ENCODE measurements at regions of chr4 and their contacts with region 1.

Region 1: DNA sequence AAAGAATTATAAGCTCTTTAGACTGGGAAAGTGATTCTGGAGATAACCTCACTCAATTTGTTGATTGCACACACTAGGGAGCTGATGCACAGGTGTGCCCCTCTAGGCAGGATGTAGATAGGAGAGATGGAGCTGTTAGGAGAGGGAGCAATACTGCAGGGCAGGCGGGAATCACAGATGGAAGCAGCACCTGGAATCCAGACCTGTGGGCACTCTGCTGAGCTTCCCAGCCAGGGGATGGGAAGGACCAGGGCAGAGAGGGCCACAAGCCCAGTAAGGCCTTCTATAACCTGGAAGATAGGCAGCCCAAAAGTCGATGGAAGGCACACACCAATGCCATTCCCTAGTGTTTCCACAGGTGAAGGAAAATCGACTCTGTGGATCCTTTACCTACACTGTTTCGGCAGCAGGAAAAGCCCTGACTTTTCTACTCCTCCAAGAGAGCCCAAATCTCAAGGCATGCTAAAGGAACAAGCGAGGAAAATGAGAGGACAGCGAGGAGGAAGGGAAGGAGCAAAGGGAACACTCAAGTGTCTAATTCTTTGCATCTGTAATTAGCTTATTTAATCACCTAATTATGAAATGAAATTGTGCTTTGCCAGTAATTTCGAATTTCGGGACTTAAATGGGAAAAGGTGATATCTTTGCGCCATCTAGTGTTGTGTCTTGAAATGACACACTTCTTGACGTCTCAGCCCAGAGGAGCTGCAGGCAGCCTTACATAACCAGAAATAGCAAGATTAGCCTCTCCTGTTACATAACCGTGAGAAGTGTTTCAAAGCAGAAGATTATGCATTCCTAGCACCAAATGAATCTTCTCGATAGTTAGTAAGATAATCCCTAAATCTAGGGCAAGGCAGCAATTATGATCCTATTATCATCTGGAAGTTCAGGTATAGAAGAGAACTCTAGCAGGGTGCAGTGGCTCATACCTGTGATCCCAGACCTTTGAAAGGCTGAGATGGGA is 31.0 kb upstream of the TLR3 start:
- DNase-seq: peak; percentile 31
- H3K4me3 Mint-ChIP-seq: no peak overlapping the region
- H3K27ac Mint-ChIP-seq: no peak overlapping the region
- H3K4me1 Mint-ChIP-seq: no peaks in the 10 kb centered on the region
- H3K27me3 Mint-ChIP-seq: peaks cover 21% of the 10 kb centered on the region

Region 2: GRCh38 chr4:185640811-185641675 is 396.9 kb before region 1 on chr4:
- CTCF ChIA-PET with region 1: interaction called, 18 read pairs
- POLR2A ChIA-PET with region 1: no interaction called
- DNase-seq: no peak
- H3K4me3 Mint-ChIP-seq: no peak overlapping the region
- H3K27ac Mint-ChIP-seq: no peak overlapping the region
- H3K4me1 Mint-ChIP-seq: peaks cover 1% of the 10 kb centered on the region
- H3K27me3 Mint-ChIP-seq: peaks cover 32% of the 10 kb centered on the region

Measured in activated CD4-positive, alpha-beta memory T cell treated with anti-CD3 and anti-CD28 coated beads, Interleukin-2, amount 10 ng/mL, durations not matched to agents 7 days and 5 days (primary cell).